ENCODE measurements at regions of chr7 and their contacts with region 1.

Region 1: DNA sequence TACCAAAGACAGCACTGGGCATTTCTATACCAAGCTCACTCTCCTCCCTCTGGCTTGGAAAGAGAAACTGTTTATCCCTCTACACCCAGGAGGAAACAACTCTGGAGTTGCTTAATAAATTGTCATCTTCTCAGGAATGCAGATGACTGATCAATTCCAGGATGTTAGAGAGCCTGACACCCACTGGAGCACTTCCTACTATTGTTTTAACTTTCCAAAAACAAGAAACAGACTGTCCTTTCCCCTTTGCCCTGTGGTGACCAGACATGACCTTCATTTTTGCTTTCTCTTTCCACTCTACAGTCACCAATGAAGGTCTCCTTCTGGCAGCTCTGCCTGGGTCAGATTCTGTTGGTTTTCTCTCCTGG is 19.6 kb downstream of the GIMAP4 start:
- DNase-seq: peak; percentile 96
- H3K4me3 ChIP-seq: peak overlapping the region in 1 of 3 experiments; percentile 24
- H3K27ac ChIP-seq: peak overlapping the region; percentile 93
- H3K4me1 ChIP-seq: peaks cover 34% of the 10 kb centered on the region
- H3K27me3 ChIP-seq: no peaks in the 10 kb centered on the region
- CTCF ChIP-seq: no peak
- POLR2A ChIP-seq: no peak

Region 2: GRCh38 chr7:150481186-150481920 is 105.4 kb before region 1 on chr7:
- CTCF ChIA-PET with region 1: no interaction called
- POLR2A ChIA-PET with region 1: interaction called, 5 read pairs
- dilution Hi-C with region 1: no loop called
- intact Hi-C with region 1: loop called (anchors 1 kb)
- DNase-seq: no peak
- H3K4me3 ChIP-seq: no peak overlapping the region
- H3K27ac ChIP-seq: no peak overlapping the region
- H3K4me1 ChIP-seq: peaks cover 15% of the 10 kb centered on the region
- H3K27me3 ChIP-seq: no peaks in the 10 kb centered on the region
- CTCF ChIP-seq: no peak
- POLR2A ChIP-seq: no peak

Region 3: GRCh38 chr7:150567169-150567568 is 19.6 kb before region 1 on chr7 and contains the start of gene GIMAP4:
- CTCF ChIA-PET with region 1: interaction called, 4 read pairs
- POLR2A ChIA-PET with region 1: interaction called, 15 read pairs
- dilution Hi-C with region 1: no loop called
- intact Hi-C with region 1: loop called (anchors 1 kb)
- DNase-seq: peak; percentile 69
- H3K4me3 ChIP-seq: peak within 1 kb of the TSS; percentile 78 to 80 (median 79)
- H3K27ac ChIP-seq: peak within 1 kb of the TSS; percentile 63
- H3K4me1 ChIP-seq: peaks cover 62% of the 10 kb centered on the region
- H3K27me3 ChIP-seq: no peaks in the 10 kb centered on the region
- CTCF ChIP-seq: no peak
- POLR2A ChIP-seq: peak; percentile 49
- total RNA-seq, gene GIMAP4: 168 and 174 TPM in 2 replicates

Region 4: GRCh38 chr7:150675714-150676113 is 88.9 kb after region 1 on chr7:
- CTCF ChIA-PET with region 1: no interaction called
- POLR2A ChIA-PET with region 1: no interaction called
- dilution Hi-C with region 1: no loop called
- intact Hi-C with region 1: loop called (anchors 1 kb)
- DNase-seq: peak; percentile 43
- H3K4me3 ChIP-seq: no peak overlapping the region
- H3K27ac ChIP-seq: peak overlapping the region; percentile 48
- H3K4me1 ChIP-seq: peaks cover 19% of the 10 kb centered on the region
- H3K27me3 ChIP-seq: no peaks in the 10 kb centered on the region
- CTCF ChIP-seq: no peak
- POLR2A ChIP-seq: no peak

Region 5: GRCh38 chr7:150685219-150686029 is 98.7 kb after region 1 on chr7 and contains the start of gene GIMAP2:
- CTCF ChIA-PET with region 1: no interaction called
- POLR2A ChIA-PET with region 1: interaction called, 4 read pairs
- dilution Hi-C with region 1: no loop called
- intact Hi-C with region 1: loop called (anchors 2 kb)
- DNase-seq: peak; percentile 87
- H3K4me3 ChIP-seq: peak within 1 kb of the TSS; percentile 22 to 93 (median 90)
- H3K27ac ChIP-seq: peak within 1 kb of the TSS; percentile 83
- H3K4me1 ChIP-seq: peaks cover 15% of the 10 kb centered on the region
- H3K27me3 ChIP-seq: no peaks in the 10 kb centered on the region
- CTCF ChIP-seq: no peak
- POLR2A ChIP-seq: no peak
- total RNA-seq, gene GIMAP2: 26.2 and 27.9 TPM in 2 replicates

Region 6: DNA sequence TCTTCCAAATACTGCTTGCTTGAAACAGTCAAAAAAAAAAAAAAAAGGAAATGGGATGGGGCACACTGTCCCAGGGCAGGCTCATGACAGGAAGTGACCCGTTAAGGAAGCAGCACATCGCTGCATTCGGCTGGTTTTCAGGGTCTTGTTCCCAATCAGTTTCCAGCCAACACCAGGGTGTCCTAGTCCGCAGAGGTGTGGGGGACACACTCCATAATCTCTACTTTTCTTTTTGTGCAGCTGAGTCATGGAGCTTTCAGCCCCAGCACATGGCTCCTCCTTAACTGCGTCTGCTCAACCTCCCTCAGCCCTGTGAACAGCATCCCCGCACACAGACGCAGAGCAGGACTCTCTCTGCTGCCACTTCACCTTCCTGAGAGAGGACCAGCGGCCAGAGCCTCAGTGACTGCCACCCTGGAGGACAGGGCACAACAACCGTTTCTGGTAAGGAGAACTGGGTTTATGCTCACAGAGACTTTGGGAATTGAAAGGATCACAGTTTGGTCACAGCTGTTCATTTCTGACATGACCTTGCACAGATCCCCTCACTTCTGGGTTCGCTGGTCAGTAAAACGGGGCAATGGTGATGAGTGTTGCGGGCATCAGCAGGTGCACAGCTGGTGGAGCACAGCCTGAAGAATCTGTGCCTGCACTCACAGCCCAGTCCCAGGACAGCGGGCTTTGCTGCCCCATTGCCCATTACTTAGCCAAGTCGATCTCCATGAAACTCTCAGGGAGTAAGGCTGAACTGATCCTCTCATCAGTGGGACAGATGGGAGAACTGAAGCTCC is 150.7 kb after region 1 on chr7 and contains the start of gene GIMAP5:
- CTCF ChIA-PET with region 1: no interaction called
- POLR2A ChIA-PET with region 1: no interaction called
- dilution Hi-C with region 1: no loop called
- intact Hi-C with region 1: loop called (anchors 5 kb)
- DNase-seq: peak; percentile 48
- H3K4me3 ChIP-seq: peak within 1 kb of the TSS in 2 of 3 experiments; percentile 32 to 46
- H3K27ac ChIP-seq: no peak within 1 kb of the TSS
- H3K4me1 ChIP-seq: peaks cover 27% of the 10 kb centered on the region
- H3K27me3 ChIP-seq: no peaks in the 10 kb centered on the region
- CTCF ChIP-seq: no peak
- POLR2A ChIP-seq: no peak
- total RNA-seq, gene GIMAP5: 0.44 and 0.85 TPM in 2 replicates